ENCODE measurements at regions of chr7 and their contacts with region 1.

Region 1: GRCh38 chr7:158829342-158830210 is at the start of gene ESYT2:
- DNase-seq: peak; percentile 99
- ATAC-seq: peak; percentile 84
- H3K4me3 Mint-ChIP-seq: peak within 1 kb of the TSS; percentile 98
- H3K27ac Mint-ChIP-seq: peak within 1 kb of the TSS; percentile 94
- H3K4me1 Mint-ChIP-seq: peaks cover 37% of the 10 kb centered on the region
- H3K27me3 Mint-ChIP-seq: peaks cover 8% of the 10 kb centered on the region
- total RNA-seq, gene ESYT2: 85.0 to 85.9 TPM

Region 2: GRCh38 chr7:158710651-158711102 is 118.9 kb before region 1 on chr7:
- CTCF ChIA-PET with region 1: no interaction called
- POLR2A ChIA-PET with region 1: no interaction called
- DNase-seq: peak; percentile 54
- ATAC-seq: peak; percentile 51
- H3K4me3 Mint-ChIP-seq: no peak overlapping the region
- H3K27ac Mint-ChIP-seq: peak overlapping the region; percentile 11
- H3K4me1 Mint-ChIP-seq: peaks cover 30% of the 10 kb centered on the region
- H3K27me3 Mint-ChIP-seq: peaks cover 3% of the 10 kb centered on the region

Region 3: GRCh38 chr7:158809596-158809995 is 20.0 kb before region 1 on chr7:
- CTCF ChIA-PET with region 1: interaction called, 14 read pairs
- POLR2A ChIA-PET with region 1: interaction called, 29 read pairs
- DNase-seq: no peak
- ATAC-seq: no peak
- H3K4me3 Mint-ChIP-seq: no peak overlapping the region
- H3K27ac Mint-ChIP-seq: peak overlapping the region; percentile 65
- H3K4me1 Mint-ChIP-seq: peaks cover 72% of the 10 kb centered on the region
- H3K27me3 Mint-ChIP-seq: no peaks in the 10 kb centered on the region

Region 4: DNA sequence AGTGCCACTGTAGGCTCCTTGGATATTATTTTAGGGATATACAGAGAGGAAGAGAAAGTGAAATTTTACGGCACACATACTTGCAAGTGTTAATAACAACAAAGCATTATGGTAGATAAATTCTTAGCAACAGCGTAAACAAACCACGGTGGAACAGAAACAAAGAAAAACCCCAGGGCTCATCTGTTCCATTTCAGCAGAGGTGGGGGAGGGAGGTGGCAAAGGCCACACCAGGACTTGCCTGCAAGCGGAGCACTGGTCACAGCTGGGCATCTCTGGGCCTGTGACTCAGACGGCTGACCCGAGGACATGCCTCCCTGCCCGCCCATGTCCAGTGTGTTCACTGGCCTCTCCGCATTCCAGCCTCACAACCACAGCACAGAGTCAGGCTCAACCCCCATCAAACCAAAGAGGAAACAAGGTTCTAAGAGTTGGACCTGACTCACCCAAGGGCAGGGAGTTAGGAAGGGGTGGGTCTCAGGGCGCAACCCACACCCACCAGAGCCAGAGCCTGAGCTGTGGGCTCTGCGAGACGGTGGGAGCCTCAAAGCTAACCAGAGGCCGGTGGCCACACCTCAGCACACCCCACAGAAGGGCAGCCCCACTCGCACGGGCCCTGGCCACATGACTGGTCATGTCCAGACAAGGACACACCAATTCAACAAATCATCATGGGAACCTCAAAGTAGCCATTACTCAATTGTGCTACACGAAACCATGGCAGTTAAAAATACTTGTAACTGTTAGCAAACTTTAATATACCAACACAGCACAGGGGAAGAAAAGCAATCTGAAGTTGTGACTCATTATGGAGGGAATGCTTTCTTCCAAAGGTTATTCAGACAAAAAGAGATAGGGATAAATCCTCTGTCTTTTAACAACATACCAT is 11.0 kb before region 1 on chr7:
- CTCF ChIA-PET with region 1: interaction called, 12 read pairs
- POLR2A ChIA-PET with region 1: interaction called, 16 read pairs
- DNase-seq: peak; percentile 87
- ATAC-seq: peak; percentile 76
- H3K4me3 Mint-ChIP-seq: peak overlapping the region; percentile 81
- H3K27ac Mint-ChIP-seq: peak overlapping the region; percentile 95
- H3K4me1 Mint-ChIP-seq: peaks cover 93% of the 10 kb centered on the region
- H3K27me3 Mint-ChIP-seq: no peaks in the 10 kb centered on the region

Region 5: GRCh38 chr7:158880973-158881372 is 51.4 kb after region 1 on chr7:
- CTCF ChIA-PET with region 1: no interaction called
- POLR2A ChIA-PET with region 1: no interaction called
- DNase-seq: no peak
- ATAC-seq: no peak
- H3K4me3 Mint-ChIP-seq: no peak overlapping the region
- H3K27ac Mint-ChIP-seq: no peak overlapping the region
- H3K4me1 Mint-ChIP-seq: no peaks in the 10 kb centered on the region
- H3K27me3 Mint-ChIP-seq: no peaks in the 10 kb centered on the region